ENCODE measurements at regions of chr2 and their contacts with region 1.

Region 1: DNA sequence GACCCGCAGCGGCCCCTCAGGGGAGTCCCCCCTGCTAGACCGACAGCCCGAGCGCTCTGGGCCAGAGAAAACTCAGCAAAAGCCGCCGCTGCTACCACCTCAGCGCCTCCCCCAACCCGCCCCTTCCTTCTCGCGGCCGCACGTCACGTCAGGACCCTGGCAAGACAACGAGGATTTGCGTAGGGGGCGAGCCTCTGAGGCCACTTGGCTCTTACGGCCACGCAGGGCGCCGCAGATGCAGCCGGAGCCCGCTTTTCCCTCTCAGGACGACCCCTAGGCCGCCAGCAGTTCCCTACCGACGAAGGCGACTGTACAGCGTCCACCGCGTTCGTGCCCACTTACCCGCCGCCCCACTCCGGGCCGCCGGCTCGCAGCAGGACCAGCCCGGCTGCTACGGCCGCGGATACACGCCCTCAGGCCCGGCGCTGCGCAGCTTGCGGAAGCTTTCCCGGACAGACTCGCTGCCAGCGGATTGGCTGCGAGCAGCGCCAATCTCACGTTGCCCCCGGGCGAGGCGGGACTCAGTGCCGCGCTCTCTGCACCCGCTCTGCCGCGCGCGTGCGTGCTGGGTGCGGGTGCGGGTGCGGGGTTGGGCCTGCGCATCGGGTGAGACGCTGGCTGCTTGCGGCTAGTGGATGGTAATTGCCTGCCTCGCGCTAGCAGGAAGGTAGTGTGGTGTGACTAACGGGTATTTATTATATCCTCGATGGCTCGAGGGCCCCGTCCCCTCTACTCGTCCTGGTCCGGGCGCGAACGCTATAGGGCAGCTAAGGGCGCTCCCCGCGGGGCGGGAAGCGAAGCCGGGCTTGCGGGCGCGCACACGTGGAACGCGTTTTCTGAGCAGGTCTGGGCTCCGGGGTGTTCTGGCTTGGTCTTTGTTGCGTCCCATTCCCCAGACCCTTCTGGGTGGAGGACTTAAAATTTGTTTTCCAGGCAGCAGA is at the starts of genes ORMDL1 and PMS1:
- DNase-seq: peak; percentile 93
- H3K4me3 ChIP-seq: peak within 1 kb of the TSS; percentile 78 to 89 (median 85)
- H3K4me3 Mint-ChIP-seq: peak within 1 kb of the TSS; percentile 90 to 94
- H3K27ac ChIP-seq: peak within 1 kb of the TSS; percentile 81 to 90
- H3K27ac Mint-ChIP-seq: peak within 1 kb of the TSS; percentile 89 to 97 (median 94)
- H3K4me1 ChIP-seq: peaks cover 28 to 33% of the 10 kb centered on the region in 2 donors
- H3K4me1 Mint-ChIP-seq: peaks cover 36% of the 10 kb centered on the region
- H3K27me3 ChIP-seq: no peaks in the 10 kb centered on the region
- H3K27me3 Mint-ChIP-seq: no peaks in the 10 kb centered on the region
- CTCF ChIP-seq: no peak
- polyA plus RNA-seq, gene ORMDL1: 76.4 to 204 (median 93.2) TPM
- polyA plus RNA-seq, gene PMS1: 3.7 to 7.8 (median 5.7) TPM

Region 2: DNA sequence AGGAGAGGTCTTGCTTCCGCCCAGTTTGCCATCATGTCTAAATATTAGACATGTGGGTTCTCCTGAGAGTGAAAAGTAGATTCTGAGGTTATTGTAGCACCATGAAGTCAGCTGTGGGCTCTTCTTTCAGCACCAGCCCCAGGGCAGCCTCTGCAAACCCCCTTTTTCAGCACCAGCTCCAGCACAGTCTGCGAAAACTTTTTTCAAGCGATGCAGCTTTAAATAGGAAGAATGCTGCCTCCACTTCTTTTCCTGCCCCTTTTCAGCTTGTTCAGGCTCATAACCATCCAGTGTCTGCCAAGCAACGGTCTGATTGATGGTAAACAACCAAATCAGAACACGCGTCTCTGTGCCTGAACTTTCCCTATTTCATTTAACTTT is 604.6 kb before region 1 on chr2 and contains the start of gene COL5A2:
- intact Hi-C with region 1: no loop called
- DNase-seq: no peak
- H3K4me3 ChIP-seq: no peak within 1 kb of the TSS
- H3K4me3 Mint-ChIP-seq: peak within 1 kb of the TSS in 1 of 2 donors; percentile 7
- H3K27ac ChIP-seq: no peak within 1 kb of the TSS
- H3K27ac Mint-ChIP-seq: no peak within 1 kb of the TSS
- H3K4me1 ChIP-seq: no peaks in the 10 kb centered on the region
- H3K4me1 Mint-ChIP-seq: no peaks in the 10 kb centered on the region
- H3K27me3 ChIP-seq: peaks cover 0 to 11% of the 10 kb centered on the region in 2 donors
- H3K27me3 Mint-ChIP-seq: peaks cover 10 to 18% (median 17%) of the 10 kb centered on the region in 3 donors
- CTCF ChIP-seq: no peak
- polyA plus RNA-seq, gene COL5A2: 0.13 TPM in 1 of 3 donors, not detected in the others

Region 3: DNA sequence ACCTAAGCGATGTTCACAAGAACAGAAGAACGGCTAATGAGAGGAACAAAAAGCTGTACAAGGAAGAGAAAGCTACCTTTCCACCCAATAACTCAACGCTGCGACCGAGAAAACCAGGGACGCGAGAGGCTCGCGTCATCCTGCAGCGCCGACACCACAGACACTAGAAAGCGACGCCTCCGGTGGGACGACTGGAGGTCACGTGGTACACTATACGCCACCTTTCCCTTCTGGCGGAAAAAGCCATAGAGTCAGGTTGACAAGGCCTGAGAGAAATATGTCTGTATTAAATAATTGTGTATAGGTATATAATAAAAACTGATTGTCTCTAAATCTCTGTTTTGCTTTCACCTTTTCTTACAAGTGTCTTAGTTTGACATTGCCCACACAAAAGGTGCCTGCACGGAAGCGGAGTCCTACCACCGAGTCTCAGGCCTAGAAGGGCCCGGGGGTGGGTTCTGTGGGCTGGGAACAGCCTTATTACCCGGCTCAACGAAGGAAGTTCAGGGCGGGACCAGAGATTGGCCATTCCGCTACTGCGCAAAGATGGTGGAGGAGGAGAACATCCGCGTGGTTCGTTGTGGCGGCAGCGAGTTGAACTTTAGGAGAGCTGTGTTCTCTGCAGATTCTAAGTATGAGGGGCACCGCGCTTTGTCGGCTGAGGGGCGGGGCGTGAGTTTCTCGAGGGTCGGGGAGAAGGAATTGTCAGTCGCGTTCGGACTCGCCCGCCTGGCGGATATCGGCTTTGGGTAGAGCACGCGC is 343.1 kb before region 1 on chr2 and contains the start of gene WDR75:
- intact Hi-C with region 1: loop called in 1 of 2 experiments (anchors 10 kb)
- DNase-seq: peak; percentile 89 to 92 (median 91)
- H3K4me3 ChIP-seq: peak within 1 kb of the TSS; percentile 71 to 87 (median 80)
- H3K4me3 Mint-ChIP-seq: peak within 1 kb of the TSS; percentile 98 to 99
- H3K27ac ChIP-seq: peak within 1 kb of the TSS; percentile 97
- H3K27ac Mint-ChIP-seq: peak within 1 kb of the TSS; percentile 97 to 100 (median 99)
- H3K4me1 ChIP-seq: peaks cover 12 to 34% of the 10 kb centered on the region in 2 donors
- H3K4me1 Mint-ChIP-seq: peaks cover 15% of the 10 kb centered on the region
- H3K27me3 ChIP-seq: no peaks in the 10 kb centered on the region
- H3K27me3 Mint-ChIP-seq: peaks cover 0 to 3% (median 0%) of the 10 kb centered on the region in 3 donors
- CTCF ChIP-seq: no peak
- polyA plus RNA-seq, gene WDR75: 3.9 to 20.7 (median 5.8) TPM

Region 4: DNA sequence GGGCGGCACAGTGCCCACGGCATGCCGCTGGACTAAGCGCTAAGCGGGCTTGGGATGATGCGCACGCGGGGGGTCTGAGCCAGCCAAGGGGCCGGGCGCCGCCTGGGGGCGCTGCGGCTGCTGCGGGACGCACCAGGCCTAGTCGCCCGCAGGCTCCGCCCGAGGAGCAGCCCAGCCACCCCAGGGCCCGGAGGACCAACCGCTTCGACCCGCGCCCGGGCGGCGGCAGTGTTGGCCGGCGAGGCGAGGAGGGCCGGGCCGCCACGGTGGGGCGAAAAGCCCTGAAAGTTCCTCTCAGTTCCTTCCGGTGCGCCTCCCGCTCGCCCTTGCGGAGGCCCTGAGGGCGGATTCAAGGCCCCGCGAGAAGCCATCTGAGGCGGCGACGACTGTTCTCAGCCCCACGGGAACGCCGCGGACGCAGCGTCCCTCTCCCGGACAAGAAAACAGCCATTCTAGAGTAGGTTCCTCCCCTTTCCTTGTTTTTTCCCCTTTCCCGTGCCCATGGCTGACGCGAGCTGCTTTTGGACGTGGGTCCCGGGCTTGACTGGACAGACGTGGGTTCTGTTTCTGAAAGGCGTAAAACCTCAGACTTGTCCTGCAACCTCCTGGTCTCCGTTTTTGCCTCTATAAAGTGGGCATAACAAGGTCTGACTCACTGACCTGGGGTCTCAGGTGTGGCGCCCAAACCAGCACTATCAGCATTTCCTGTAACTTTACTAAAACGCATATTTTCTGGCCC is 109.7 kb before region 1 on chr2 and contains the start of gene ANKAR:
- intact Hi-C with region 1: loop called (anchors 5 to 10 kb)
- DNase-seq: peak; percentile 86 to 89 (median 89)
- H3K4me3 ChIP-seq: peak within 1 kb of the TSS; percentile 58 to 82 (median 63)
- H3K4me3 Mint-ChIP-seq: peak within 1 kb of the TSS; percentile 90 to 97
- H3K27ac ChIP-seq: peak within 1 kb of the TSS; percentile 78 to 93
- H3K27ac Mint-ChIP-seq: peak within 1 kb of the TSS; percentile 91 to 98 (median 95)
- H3K4me1 ChIP-seq: peaks cover 15 to 18% of the 10 kb centered on the region in 2 donors
- H3K4me1 Mint-ChIP-seq: peaks cover 26% of the 10 kb centered on the region
- H3K27me3 ChIP-seq: no peaks in the 10 kb centered on the region
- H3K27me3 Mint-ChIP-seq: no peaks in the 10 kb centered on the region
- CTCF ChIP-seq: peak; percentile 90
- polyA plus RNA-seq, gene ANKAR: 1.1 to 2.3 (median 1.4) TPM

Measured in CD14-positive monocyte (primary cell).